Natural killer cell (primary cell): ENCODE measurements at regions of chr11 and their contacts with region 1.

Region 1: GRCh38 chr11:120929664-120930154 is 94.2 kb upstream of the TBCEL start:
- DNase-seq: peak; percentile 64 to 65
- ATAC-seq: peak; percentile 82 to 92 (median 90)
- H3K4me3 ChIP-seq: no peak overlapping the region
- H3K4me3 Mint-ChIP-seq: no peak overlapping the region
- H3K27ac ChIP-seq: peak overlapping the region; percentile 27
- H3K27ac Mint-ChIP-seq: peak overlapping the region in 1 of 2 donors; percentile 80
- H3K4me1 ChIP-seq: peaks cover 11% of the 10 kb centered on the region
- H3K4me1 Mint-ChIP-seq: peaks cover 35 to 55% of the 10 kb centered on the region in 2 donors
- H3K27me3 ChIP-seq: no peaks in the 10 kb centered on the region
- H3K27me3 Mint-ChIP-seq: no peaks in the 10 kb centered on the region
- CTCF ChIP-seq: peak; percentile 70

Region 2: DNA sequence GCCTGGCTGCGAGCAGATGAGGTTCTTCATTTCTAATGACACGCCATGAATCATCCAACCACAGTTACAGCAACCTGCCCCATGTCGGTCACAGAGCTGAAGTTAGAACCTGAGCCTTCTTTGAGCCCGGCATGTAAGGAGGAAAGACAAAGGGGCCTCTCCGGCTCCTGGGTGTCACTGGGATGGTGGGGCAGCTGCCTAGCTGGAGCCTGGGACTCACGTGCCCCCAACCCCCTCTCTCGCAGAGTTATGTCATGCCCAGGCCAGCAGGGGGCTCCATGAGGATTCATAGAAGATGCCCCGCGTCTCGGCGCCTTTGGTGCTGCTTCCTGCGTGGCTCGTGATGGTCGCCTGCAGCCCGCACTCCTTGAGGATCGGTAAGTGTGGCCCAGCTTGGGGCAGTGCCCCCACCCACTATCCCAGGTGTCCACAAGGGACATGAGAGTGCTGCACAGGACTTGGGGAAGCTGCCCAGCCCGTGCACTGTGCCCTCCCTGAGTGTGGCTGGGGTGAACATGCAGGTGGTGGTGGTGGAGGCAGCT is 269.6 kb before region 1 on chr11:
- intact Hi-C with region 1: loop called (anchors 1 kb)
- DNase-seq: peak; percentile 19 to 64
- ATAC-seq: peak; percentile 62 to 88 (median 69)
- H3K4me3 ChIP-seq: no peak overlapping the region
- H3K4me3 Mint-ChIP-seq: peak overlapping the region; percentile 21
- H3K27ac ChIP-seq: no peak overlapping the region
- H3K27ac Mint-ChIP-seq: peak overlapping the region in 1 of 2 donors; percentile 83
- H3K4me1 ChIP-seq: peaks cover 18% of the 10 kb centered on the region
- H3K4me1 Mint-ChIP-seq: peaks cover 21 to 56% of the 10 kb centered on the region in 2 donors
- H3K27me3 ChIP-seq: no peaks in the 10 kb centered on the region
- H3K27me3 Mint-ChIP-seq: peaks cover 0 to 4% of the 10 kb centered on the region in 2 donors
- CTCF ChIP-seq: peak; percentile 62

Region 3: DNA sequence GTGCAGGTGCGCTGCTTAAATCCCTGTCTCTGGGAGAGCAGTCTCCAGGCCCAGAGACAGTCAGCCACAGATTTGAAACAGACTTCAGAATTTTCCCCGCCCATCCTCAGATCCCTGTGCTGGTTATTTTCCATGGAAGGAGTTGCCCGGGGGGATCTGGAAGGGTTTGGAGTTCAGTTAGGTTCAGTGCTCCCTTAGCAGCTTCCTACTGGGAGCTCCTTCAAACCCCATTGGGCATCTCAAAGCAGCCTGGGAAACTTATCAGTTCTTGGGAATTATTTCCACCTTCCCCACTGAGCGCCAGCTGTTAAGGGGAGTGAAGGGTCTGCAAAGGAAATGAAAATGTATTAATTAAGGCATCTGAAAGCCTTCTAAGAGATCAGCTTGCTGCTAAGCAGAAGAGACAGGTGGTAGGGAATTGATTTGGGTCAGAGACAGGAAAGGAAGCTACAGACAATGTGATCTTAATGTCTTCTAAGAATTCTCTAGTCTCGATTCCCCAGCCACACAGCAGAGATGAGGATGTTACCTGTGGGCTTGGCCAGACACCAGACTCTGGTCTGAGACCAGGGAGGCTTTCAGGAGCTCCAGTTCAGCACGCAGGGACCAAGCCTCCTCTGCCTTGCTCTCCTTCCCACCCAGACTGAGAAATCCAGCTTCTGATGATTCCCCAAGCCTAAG is 12.0 kb before region 1 on chr11:
- intact Hi-C with region 1: no loop called
- DNase-seq: no peak
- ATAC-seq: no peak
- H3K4me3 ChIP-seq: no peak overlapping the region
- H3K4me3 Mint-ChIP-seq: no peak overlapping the region
- H3K27ac ChIP-seq: no peak overlapping the region
- H3K27ac Mint-ChIP-seq: peak overlapping the region in 1 of 2 donors; percentile 80
- H3K4me1 ChIP-seq: peaks cover 11% of the 10 kb centered on the region
- H3K4me1 Mint-ChIP-seq: peaks cover 31 to 79% of the 10 kb centered on the region in 2 donors
- H3K27me3 ChIP-seq: no peaks in the 10 kb centered on the region
- H3K27me3 Mint-ChIP-seq: no peaks in the 10 kb centered on the region
- CTCF ChIP-seq: no peak